Activated CD8-positive, alpha-beta T cell treated with anti-CD3 and anti-CD28 coated beads for 36 hours (primary cell): ENCODE measurements at regions of chr15 and their contacts with region 1.

Region 1: DNA sequence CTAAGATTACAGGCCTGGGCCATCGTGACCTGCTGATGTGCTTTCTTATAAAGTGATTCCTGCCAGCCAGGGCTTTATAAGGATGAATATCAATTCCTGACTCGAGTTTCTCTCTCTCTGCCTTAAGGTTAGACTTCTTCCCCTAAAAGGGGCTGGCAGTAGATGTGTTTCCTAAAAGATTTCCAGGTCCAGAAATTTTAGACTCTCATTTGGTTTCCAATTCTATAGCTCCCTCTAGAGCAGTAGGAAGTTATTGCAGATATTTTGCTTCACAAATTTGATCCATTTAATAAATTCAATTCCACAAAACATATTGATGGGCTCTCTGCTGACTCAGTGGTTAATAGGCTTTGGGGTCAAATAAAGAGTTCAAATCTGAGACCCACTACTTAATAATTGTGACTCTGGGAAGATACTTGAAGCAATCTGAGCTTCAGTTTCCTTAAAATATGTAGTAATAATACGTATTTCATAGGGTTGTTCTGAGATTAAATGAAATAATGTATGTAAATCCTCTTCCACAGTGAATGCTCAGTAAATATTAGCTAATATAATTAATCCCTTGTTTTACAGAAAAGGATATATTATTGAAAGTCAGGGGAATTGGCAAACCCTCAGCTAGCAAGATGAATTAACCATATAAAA is 2.1 kb downstream of the TRIM69 start:
- DNase-seq: no peak
- ATAC-seq: no peak
- H3K4me3 Mint-ChIP-seq: peak overlapping the region; percentile 67
- H3K27ac Mint-ChIP-seq: peak overlapping the region; percentile 86
- H3K4me1 Mint-ChIP-seq: peaks cover 53% of the 10 kb centered on the region
- H3K27me3 Mint-ChIP-seq: no peaks in the 10 kb centered on the region
- CTCF ChIP-seq: peak; percentile 85

Region 2: DNA sequence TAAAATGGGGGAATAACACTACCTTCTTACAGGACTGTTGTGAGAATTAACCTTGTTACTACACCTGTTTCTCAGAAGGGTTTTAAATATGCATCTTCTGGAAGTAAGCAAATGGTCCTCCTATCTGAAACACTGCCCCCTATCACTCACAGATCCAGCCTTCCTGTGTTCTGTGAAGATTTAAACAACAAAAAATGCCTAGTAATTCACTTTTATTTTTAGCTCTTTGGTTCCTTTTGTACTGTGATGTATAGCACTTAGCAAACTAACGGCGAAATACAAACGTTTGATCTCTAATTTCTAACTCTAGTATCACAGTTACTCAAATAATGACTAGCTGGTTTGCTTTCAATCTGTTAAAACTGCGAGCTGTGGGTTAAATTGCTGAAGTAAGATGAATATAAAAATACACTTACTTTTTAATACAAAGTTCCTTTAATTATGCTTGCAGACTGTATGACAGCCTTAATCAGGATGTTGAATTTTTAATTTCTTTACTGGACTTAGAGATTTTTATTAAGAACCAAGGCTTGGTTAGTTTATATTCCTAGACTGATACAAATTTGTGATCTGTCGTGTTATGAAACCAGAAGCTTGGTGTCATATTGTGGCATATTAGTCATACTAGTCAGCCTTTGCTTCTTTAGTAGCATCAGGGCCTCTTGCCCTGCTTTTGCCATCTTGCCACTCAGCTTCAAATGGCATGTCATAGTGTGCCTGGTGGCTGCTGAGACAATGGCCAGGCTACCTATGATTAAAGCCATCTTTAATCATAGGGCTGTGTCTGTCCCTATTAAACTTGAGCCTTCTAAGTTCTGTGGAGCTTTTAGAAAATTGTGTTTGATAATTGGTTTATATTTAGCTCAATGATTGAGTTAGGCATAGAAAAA is 192.3 kb before region 1 on chr15:
- CTCF ChIA-PET with region 1: interaction called, 15 read pairs
- POLR2A ChIA-PET with region 1: no interaction called
- intact Hi-C with region 1: no loop called
- DNase-seq: peak; percentile 78
- ATAC-seq: peak; percentile 94
- H3K4me3 Mint-ChIP-seq: peak overlapping the region; percentile 48
- H3K27ac Mint-ChIP-seq: peak overlapping the region; percentile 87
- H3K4me1 Mint-ChIP-seq: peaks cover 56% of the 10 kb centered on the region
- H3K27me3 Mint-ChIP-seq: no peaks in the 10 kb centered on the region
- CTCF ChIP-seq: peak; percentile 38

Region 3: GRCh38 chr15:44584162-44584749 is 154.2 kb before region 1 on chr15:
- CTCF ChIA-PET with region 1: interaction called, 110 read pairs
- POLR2A ChIA-PET with region 1: no interaction called
- intact Hi-C with region 1: loop called (anchors 5 kb)
- DNase-seq: peak; percentile 70
- ATAC-seq: peak; percentile 88
- H3K4me3 Mint-ChIP-seq: no peak overlapping the region
- H3K27ac Mint-ChIP-seq: no peak overlapping the region
- H3K4me1 Mint-ChIP-seq: peaks cover 7% of the 10 kb centered on the region
- H3K27me3 Mint-ChIP-seq: no peaks in the 10 kb centered on the region
- CTCF ChIP-seq: peak; percentile 43

Region 4: DNA sequence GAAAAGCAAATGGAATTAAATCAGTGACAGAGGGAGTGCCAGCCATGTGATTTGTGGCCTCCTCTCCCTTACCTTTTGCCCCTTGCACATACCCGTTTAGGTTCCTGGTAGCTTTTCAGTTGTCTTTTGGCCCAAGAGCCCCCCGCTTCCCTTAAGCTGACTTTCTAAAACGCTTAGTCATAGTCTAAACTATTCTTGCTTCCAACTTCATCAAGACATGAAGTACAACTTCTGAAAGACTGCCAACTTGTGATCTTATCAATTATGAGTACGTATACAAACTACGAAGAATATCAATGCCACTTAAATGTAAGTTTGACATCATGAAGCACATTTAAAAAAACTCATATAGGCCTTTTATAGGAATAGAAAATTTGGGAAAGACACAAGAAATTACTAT is 139.6 kb before region 1 on chr15:
- CTCF ChIA-PET with region 1: interaction called, 110 read pairs
- POLR2A ChIA-PET with region 1: interaction called, 4 read pairs
- intact Hi-C with region 1: loop called (anchors 5 kb)
- DNase-seq: no peak
- ATAC-seq: no peak
- H3K4me3 Mint-ChIP-seq: no peak overlapping the region
- H3K27ac Mint-ChIP-seq: peak overlapping the region; percentile 30
- H3K4me1 Mint-ChIP-seq: peaks cover 36% of the 10 kb centered on the region
- H3K27me3 Mint-ChIP-seq: no peaks in the 10 kb centered on the region
- CTCF ChIP-seq: no peak

Region 5: DNA sequence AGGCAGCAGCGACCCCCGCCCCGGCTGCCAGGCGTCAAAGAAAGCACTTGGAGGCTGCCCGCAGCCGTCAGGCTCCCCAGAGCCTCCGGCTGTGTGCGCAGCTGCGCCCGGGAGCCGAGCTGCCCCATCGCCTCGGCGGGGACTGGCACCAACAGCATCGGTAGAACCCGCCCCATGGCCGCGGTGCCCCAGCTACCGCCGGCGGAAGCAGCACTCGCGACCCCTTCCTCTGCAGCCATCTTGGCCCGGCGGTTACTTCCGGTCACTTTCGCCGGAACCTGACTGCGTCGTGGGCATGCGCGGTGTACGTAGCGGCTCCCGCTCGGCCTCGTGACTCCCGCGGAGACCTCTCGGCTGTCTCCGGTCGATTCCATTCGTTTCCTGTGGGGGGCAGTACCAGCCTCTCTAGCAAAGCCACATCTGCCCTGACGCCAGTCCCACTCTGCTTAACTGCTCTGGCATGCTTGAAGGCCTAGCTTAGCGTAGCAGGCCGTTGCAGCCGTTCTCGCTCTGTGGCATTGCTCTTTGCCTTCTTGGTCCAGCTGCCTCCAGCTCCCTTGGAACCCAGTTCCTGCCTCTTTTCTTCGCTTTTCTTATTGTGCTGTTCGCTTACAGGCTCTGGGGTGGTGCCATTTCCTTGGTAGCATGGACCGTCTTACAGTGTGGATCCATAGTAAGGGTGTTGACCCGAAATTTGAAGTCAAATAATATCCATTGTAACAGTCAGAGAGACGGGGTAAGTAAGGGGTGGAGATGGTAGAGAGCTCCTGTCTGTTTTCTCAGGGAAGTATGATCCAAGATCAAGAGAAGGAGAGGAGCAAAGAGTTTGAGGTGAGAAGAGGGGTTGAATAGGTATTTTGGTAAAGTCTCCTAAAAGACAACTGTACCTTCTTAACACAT is 74.8 kb before region 1 on chr15 and contains the start of gene SPG11:
- CTCF ChIA-PET with region 1: interaction called, 150 read pairs
- POLR2A ChIA-PET with region 1: interaction called, 1,862 read pairs
- intact Hi-C with region 1: no loop called
- DNase-seq: peak; percentile 99
- ATAC-seq: peak; percentile 89
- H3K4me3 Mint-ChIP-seq: peak within 1 kb of the TSS; percentile 93
- H3K27ac Mint-ChIP-seq: peak within 1 kb of the TSS; percentile 97
- H3K4me1 Mint-ChIP-seq: peaks cover 59% of the 10 kb centered on the region
- H3K27me3 Mint-ChIP-seq: no peaks in the 10 kb centered on the region
- CTCF ChIP-seq: peak; percentile 86
- total RNA-seq, gene SPG11: 68.6 to 71.5 TPM

Region 6: GRCh38 chr15:44719293-44719999 is 19.0 kb before region 1 on chr15:
- CTCF ChIA-PET with region 1: interaction called, 333 read pairs
- POLR2A ChIA-PET with region 1: interaction called, 1,567 read pairs
- intact Hi-C with region 1: no loop called
- DNase-seq: peak; percentile 89
- ATAC-seq: peak; percentile 72
- H3K4me3 Mint-ChIP-seq: peak overlapping the region; percentile 44
- H3K27ac Mint-ChIP-seq: peak overlapping the region; percentile 96
- H3K4me1 Mint-ChIP-seq: peaks cover 88% of the 10 kb centered on the region
- H3K27me3 Mint-ChIP-seq: no peaks in the 10 kb centered on the region
- CTCF ChIP-seq: no peak

Region 7: GRCh38 chr15:44763187-44763586 is 24.7 kb after region 1 on chr15:
- CTCF ChIA-PET with region 1: interaction called, 10 read pairs
- POLR2A ChIA-PET with region 1: interaction called, 3 read pairs
- intact Hi-C with region 1: no loop called
- DNase-seq: no peak
- ATAC-seq: no peak
- H3K4me3 Mint-ChIP-seq: no peak overlapping the region
- H3K27ac Mint-ChIP-seq: no peak overlapping the region
- H3K4me1 Mint-ChIP-seq: no peaks in the 10 kb centered on the region
- H3K27me3 Mint-ChIP-seq: no peaks in the 10 kb centered on the region
- CTCF ChIP-seq: no peak

Region 8: GRCh38 chr15:44861439-44861910 is 123.0 kb after region 1 on chr15:
- CTCF ChIA-PET with region 1: no interaction called
- POLR2A ChIA-PET with region 1: no interaction called
- intact Hi-C with region 1: no loop called
- DNase-seq: no peak
- ATAC-seq: no peak
- H3K4me3 Mint-ChIP-seq: no peak overlapping the region
- H3K27ac Mint-ChIP-seq: no peak overlapping the region
- H3K4me1 Mint-ChIP-seq: no peaks in the 10 kb centered on the region
- H3K27me3 Mint-ChIP-seq: no peaks in the 10 kb centered on the region
- CTCF ChIP-seq: no peak

Region 9: GRCh38 chr15:44873103-44873502 is 134.6 kb after region 1 on chr15:
- CTCF ChIA-PET with region 1: no interaction called
- POLR2A ChIA-PET with region 1: no interaction called
- intact Hi-C with region 1: no loop called
- DNase-seq: no peak
- ATAC-seq: no peak
- H3K4me3 Mint-ChIP-seq: no peak overlapping the region
- H3K27ac Mint-ChIP-seq: no peak overlapping the region
- H3K4me1 Mint-ChIP-seq: no peaks in the 10 kb centered on the region
- H3K27me3 Mint-ChIP-seq: peaks cover 12% of the 10 kb centered on the region
- CTCF ChIP-seq: no peak

Region 10: DNA sequence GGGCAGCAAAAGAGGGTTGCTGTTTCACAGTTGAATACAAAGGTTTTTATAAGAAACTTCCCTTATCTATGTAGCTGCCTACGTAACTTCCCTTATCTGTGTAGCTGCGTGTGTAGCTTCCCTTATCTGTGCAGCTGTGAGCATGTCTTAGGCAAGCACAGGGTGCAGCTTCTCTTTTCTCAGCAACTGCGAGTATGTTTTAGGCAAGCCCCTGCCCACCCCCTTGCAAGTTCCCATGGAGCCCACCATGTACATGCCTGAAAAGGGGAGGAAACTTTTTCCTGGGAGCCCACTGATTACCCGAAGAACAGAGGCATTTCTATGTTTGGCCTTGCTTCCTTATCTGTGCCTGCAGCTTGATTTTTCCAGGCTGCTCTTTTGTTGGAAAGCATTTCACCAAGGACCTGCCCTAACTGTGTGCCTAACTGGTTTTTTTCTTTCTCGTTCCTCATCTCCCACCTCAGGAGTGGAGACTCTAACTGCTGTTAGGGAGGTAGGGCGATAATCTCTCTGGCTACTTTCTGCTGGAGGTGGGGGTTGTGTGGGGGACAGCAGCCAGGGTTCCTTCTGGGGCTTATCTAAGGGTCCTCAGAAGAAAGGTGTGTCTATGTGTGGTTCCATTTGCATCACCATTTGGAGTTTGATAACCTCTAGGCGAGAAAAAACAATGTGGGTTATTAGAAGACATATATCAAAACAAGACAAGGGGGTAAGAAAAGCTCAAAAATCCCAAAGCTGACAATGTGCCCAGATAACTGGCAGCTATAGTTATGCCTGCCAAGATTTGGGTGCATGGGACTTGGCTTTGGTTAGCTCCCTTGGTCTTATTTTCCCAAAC is 310.6 kb after region 1 on chr15:
- CTCF ChIA-PET with region 1: no interaction called
- POLR2A ChIA-PET with region 1: no interaction called
- intact Hi-C with region 1: no loop called
- DNase-seq: no peak
- ATAC-seq: no peak
- H3K4me3 Mint-ChIP-seq: no peak overlapping the region
- H3K27ac Mint-ChIP-seq: no peak overlapping the region
- H3K4me1 Mint-ChIP-seq: no peaks in the 10 kb centered on the region
- H3K27me3 Mint-ChIP-seq: no peaks in the 10 kb centered on the region
- CTCF ChIP-seq: no peak